Activated naive CD4-positive, alpha-beta T cell treated with anti-CD3 and anti-CD28 coated beads for 36 hours (primary cell): ENCODE measurements at regions of chr19 and their contacts with region 1.

Region 1: DNA sequence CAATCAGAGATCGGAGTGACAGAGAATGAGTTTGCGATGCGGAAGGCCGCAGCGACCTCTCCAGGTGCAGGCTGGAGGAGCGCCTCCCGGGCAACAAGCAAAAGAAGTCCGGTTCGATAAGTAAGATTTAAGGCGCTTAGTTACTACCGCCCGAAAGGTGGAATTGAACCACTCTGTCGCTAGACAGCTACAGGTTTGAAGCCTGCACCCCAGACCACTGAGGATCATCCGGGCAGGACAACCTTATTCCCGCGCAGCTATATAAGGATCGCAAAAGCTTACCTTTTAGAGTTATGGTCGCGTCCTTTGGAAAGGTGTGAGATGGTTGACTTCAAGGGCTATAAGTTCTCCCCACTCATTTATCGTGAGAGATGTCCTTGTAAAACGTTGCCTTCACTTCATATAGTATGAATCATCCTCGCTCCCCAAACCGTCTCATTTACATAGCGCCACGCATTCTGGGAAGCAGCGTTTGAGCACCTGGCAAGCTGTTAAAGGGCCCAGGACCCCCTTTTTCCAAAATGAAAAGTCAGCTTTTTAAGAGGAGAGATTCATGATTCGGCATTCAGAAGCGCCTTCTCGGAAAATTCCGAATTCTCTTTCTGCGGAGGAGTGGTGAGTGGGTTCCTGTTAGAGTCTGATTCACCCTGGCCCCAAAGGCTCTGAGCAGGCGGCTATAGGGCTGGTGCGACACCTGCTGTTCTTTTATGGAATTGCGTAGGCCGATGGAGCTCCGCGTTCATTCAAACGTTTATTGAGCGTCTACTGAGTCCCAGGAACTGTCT is 10.8 kb downstream of the FOSB start:
- DNase-seq: peak; percentile 96
- H3K4me3 Mint-ChIP-seq: peak overlapping the region; percentile 54
- H3K27ac Mint-ChIP-seq: peak overlapping the region; percentile 95
- H3K4me1 Mint-ChIP-seq: peaks cover 22% of the 10 kb centered on the region
- H3K27me3 Mint-ChIP-seq: peaks cover 2% of the 10 kb centered on the region

Region 2: GRCh38 chr19:45250832-45251451 is 227.7 kb before region 1 on chr19 and contains the start of gene MARK4:
- CTCF ChIA-PET with region 1: no interaction called
- intact Hi-C with region 1: loop called (anchors 5 kb)
- DNase-seq: peak; percentile 47
- H3K4me3 Mint-ChIP-seq: peak within 1 kb of the TSS; percentile 79
- H3K27ac Mint-ChIP-seq: no peak within 1 kb of the TSS
- H3K4me1 Mint-ChIP-seq: peaks cover 26% of the 10 kb centered on the region
- H3K27me3 Mint-ChIP-seq: no peaks in the 10 kb centered on the region
- total RNA-seq, gene MARK4: 13.0 to 15.7 TPM

Region 3: DNA sequence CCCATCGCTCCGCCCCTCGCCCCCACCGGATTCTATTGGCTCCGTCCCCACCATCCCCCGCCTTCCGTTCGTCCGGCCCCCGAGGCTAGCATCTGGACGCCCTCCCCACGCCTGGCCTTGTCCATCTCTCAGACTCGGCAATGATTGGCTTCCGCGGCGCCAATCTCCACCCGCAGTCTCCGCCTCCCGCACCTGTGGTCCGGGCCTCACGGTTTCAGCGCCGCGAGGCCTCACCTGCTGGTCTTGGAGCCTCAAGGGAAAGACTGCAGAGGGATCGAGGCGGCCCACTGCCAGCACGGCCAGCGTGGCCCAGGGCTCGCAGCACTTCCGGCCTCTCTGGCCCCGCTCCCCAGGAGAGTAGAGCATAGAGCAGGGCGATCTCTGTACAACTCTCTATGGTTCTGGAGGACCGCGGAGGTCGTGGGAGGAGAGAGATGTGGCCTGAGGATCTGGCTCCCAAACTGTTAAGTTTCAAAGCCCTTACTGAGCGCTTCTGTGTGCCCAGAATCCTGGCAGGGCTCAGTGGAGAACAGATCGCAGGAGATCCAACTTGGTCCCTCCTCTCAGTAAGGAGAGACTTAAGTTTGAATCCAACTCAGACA is 55.0 kb before region 1 on chr19 and contains the start of gene ERCC1:
- CTCF ChIA-PET with region 1: interaction called, 16 read pairs
- intact Hi-C with region 1: loop called (anchors 1 kb)
- DNase-seq: peak; percentile 90
- H3K4me3 Mint-ChIP-seq: peak within 1 kb of the TSS; percentile 94
- H3K27ac Mint-ChIP-seq: peak within 1 kb of the TSS; percentile 90
- H3K4me1 Mint-ChIP-seq: peaks cover 63% of the 10 kb centered on the region
- H3K27me3 Mint-ChIP-seq: peaks cover 3% of the 10 kb centered on the region
- total RNA-seq, gene ERCC1: 28.9 to 30.7 TPM

Region 4: DNA sequence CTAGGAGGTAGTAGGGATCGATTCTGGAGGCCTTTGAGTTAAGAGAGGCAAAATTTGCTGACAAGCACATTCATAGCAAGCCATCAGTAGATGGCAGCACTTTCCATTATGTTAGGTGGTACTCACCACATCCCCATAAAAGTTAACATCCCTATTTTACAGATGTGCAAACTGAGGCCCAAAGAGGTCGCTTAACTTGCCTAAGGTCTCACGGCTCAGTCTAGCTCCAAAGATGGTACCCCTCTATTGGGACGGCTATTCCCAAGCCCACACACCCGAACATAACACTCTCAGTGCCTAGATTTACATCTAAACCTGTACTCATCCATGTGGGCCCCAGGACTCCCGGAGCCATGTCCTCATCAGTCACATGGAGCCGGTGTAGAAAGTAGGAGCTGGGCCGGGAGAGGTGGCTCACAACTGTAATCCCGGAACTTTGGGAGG is 32.3 kb before region 1 on chr19:
- CTCF ChIA-PET with region 1: interaction called, 351 read pairs
- intact Hi-C with region 1: loop called (anchors 1 kb)
- DNase-seq: peak; percentile 32
- H3K4me3 Mint-ChIP-seq: no peak overlapping the region
- H3K27ac Mint-ChIP-seq: no peak overlapping the region
- H3K4me1 Mint-ChIP-seq: peaks cover 36% of the 10 kb centered on the region
- H3K27me3 Mint-ChIP-seq: no peaks in the 10 kb centered on the region

Region 5: GRCh38 chr19:45542234-45542668 is 63.6 kb after region 1 on chr19:
- CTCF ChIA-PET with region 1: no interaction called
- intact Hi-C with region 1: no loop called
- DNase-seq: no peak
- H3K4me3 Mint-ChIP-seq: no peak overlapping the region
- H3K27ac Mint-ChIP-seq: no peak overlapping the region
- H3K4me1 Mint-ChIP-seq: peaks cover 7% of the 10 kb centered on the region
- H3K27me3 Mint-ChIP-seq: no peaks in the 10 kb centered on the region